ENCODE measurements at regions of chr2 and their contacts with region 1.

Region 1: GRCh38 chr2:235149240-235149659 is 197.4 kb downstream of the SH3BP4 start:
- ATAC-seq: peak in 5 of 8 experiments; percentile 66 to 93 (median 76)
- H3K4me3 ChIP-seq: no peak overlapping the region
- H3K27ac ChIP-seq: no peak overlapping the region
- H3K4me1 ChIP-seq: peaks cover 0 to 10% of the 10 kb centered on the region in 2 donors

Region 2: GRCh38 chr2:235588750-235589149 is 439.5 kb after region 1 on chr2:
- in situ Hi-C with region 1: loop called in 6 of 9 experiments (anchors 10 to 25 kb)
- ATAC-seq: peak in 3 of 8 experiments; percentile 33 to 64 (median 63)
- H3K4me3 ChIP-seq: no peak overlapping the region
- H3K27ac ChIP-seq: no peak overlapping the region
- H3K4me1 ChIP-seq: peaks cover 10 to 11% of the 10 kb centered on the region in 2 donors

Region 3: GRCh38 chr2:235940330-235940729 is 791.1 kb after region 1 on chr2:
- in situ Hi-C with region 1: no loop called
- ATAC-seq: peak; percentile 56 to 100 (median 99)
- H3K4me3 ChIP-seq: no peak overlapping the region
- H3K27ac ChIP-seq: no peak overlapping the region
- H3K4me1 ChIP-seq: peaks cover 10 to 16% of the 10 kb centered on the region in 2 donors